ENCODE measurements at regions of chr13 and their contacts with region 1.

Region 1: GRCh38 chr13:78596736-78597601 is 6.4 kb downstream of the POU4F1 start:
- DNase-seq: no peak
- H3K4me3 Mint-ChIP-seq: no peak overlapping the region
- H3K27ac Mint-ChIP-seq: peak overlapping the region; percentile 38
- H3K4me1 Mint-ChIP-seq: peaks cover 16% of the 10 kb centered on the region
- H3K27me3 Mint-ChIP-seq: peaks cover 77% of the 10 kb centered on the region

Region 2: DNA sequence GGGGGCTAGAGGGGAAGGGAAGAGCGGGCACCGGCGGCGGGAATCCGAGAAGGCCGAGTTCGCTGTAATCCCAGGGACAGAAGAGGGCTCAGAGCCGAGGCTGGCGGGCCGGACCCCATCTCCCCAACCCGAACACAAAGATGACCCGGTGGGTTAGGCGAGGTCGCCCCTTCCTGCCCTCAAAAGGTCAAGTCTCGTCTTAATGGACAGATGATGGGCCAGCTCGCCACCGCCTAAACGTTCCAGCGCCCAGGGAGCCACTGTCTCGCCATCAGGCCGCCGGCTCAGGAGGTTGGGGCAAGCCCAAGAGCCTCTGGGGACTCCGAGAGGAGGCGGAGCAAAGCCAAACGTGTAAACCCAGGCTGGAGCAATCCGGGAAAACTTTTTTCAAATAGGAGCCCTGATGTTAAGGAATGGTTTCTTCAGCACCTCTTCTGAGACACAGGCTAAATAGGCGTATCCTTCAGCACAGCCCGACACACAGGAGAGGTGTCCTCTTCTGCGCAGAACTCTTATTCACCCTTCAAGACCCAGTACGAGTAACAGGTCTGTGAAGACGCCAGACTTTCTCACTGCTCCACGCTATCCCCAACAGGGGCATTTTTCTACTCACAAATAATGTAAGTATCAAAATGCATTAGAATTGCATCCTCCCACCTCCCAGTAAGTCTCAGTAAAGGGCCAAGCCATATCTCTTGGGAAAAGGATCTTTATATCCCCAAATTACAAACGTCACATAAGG is 12.7 kb after region 1 on chr13:
- CTCF ChIA-PET with region 1: no interaction called
- POLR2A ChIA-PET with region 1: no interaction called
- intact Hi-C with region 1: loop called (anchors 1 kb)
- DNase-seq: no peak
- H3K4me3 Mint-ChIP-seq: peak overlapping the region; percentile 53
- H3K27ac Mint-ChIP-seq: no peak overlapping the region
- H3K4me1 Mint-ChIP-seq: peaks cover 30% of the 10 kb centered on the region
- H3K27me3 Mint-ChIP-seq: peaks cover 55% of the 10 kb centered on the region